HEK293T (cell line): ENCODE measurements at regions of chr1 and their contacts with region 1.

Region 1: GRCh38 chr1:201154389-201155165 is at the start of gene TMEM9:
- DNase-seq: peak; percentile 100

Region 2: DNA sequence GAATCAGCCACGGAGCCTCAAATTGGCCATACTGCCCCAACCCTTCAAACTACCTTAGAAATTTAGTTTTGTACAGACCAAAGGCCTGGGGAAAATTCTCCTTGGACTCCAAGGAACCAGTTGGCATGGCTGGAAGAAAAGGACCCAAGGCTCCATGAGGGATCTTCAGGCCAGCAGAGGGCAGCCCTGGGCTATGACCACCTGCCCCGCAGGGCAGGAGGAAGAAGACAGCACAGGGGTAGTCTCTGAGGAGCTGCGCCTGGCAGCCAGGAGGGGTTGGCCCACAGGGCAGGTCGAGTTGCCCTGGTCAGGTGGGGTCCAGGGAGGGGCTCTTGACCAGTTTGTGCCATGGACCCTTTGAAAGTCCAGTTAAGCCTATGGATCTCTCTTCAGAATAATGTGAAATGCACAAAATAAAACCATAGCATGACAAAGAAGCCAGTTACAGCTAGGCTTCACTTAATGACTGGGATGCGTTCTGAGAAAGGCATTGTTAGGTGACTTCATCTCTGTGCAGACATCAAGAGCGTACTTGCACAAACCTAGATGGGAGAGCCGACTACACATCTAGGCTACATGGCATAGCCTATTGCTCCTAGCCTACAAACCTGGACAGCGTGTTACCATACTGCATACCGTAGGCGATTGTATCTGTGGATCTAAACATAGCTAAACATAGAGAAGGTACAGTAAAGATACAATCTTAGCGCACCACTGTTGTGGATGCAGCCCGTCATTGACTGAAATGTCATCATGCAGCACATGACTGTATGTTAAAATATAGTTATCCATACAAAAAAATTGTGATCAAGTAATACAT is 68.5 kb before region 1 on chr1:
- CTCF ChIA-PET with region 1: no interaction called
- POLR2A ChIA-PET with region 1: no interaction called
- DNase-seq: peak; percentile 81

Region 3: GRCh38 chr1:201126832-201127754 is 27.5 kb before region 1 on chr1 and contains the start of gene ASCL5:
- CTCF ChIA-PET with region 1: no interaction called
- POLR2A ChIA-PET with region 1: no interaction called
- DNase-seq: no peak

Region 4: GRCh38 chr1:201170533-201171062 is 16.0 kb after region 1 on chr1:
- CTCF ChIA-PET with region 1: interaction called, 4 read pairs
- POLR2A ChIA-PET with region 1: interaction called, 31 read pairs
- DNase-seq: peak; percentile 97